ENCODE measurements at regions of chr2 and their contacts with region 1.

Region 1: DNA sequence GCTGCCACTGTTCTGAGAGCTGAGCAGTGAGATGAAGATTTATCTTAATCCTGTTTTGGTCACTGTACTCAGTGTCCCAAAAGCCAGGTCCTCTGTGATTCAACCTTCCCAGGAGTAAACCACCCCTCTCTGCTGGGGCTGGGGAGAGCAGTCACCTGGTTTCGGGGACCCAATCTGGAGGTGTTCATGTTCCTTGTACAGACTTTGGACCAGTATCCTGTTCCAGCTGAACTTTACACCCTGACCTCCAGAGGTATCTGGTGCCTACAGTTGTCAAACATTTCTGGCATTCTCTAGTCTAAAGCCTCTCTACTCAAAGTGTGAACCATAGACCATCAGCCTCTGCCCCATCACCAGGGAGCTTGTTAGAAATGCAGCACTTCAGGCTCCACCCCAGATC is 22.1 kb downstream of the CERS6 start:
- DNase-seq: peak; percentile 48 to 65
- H3K4me3 ChIP-seq: no peak overlapping the region
- H3K4me3 Mint-ChIP-seq: no peak overlapping the region
- H3K27ac Mint-ChIP-seq: peak overlapping the region; percentile 76
- H3K4me1 ChIP-seq: peaks cover 36% of the 10 kb centered on the region
- H3K4me1 Mint-ChIP-seq: peaks cover 38% of the 10 kb centered on the region
- H3K27me3 ChIP-seq: no peaks in the 10 kb centered on the region
- H3K27me3 Mint-ChIP-seq: no peaks in the 10 kb centered on the region
- CTCF ChIP-seq: no peak

Region 2: DNA sequence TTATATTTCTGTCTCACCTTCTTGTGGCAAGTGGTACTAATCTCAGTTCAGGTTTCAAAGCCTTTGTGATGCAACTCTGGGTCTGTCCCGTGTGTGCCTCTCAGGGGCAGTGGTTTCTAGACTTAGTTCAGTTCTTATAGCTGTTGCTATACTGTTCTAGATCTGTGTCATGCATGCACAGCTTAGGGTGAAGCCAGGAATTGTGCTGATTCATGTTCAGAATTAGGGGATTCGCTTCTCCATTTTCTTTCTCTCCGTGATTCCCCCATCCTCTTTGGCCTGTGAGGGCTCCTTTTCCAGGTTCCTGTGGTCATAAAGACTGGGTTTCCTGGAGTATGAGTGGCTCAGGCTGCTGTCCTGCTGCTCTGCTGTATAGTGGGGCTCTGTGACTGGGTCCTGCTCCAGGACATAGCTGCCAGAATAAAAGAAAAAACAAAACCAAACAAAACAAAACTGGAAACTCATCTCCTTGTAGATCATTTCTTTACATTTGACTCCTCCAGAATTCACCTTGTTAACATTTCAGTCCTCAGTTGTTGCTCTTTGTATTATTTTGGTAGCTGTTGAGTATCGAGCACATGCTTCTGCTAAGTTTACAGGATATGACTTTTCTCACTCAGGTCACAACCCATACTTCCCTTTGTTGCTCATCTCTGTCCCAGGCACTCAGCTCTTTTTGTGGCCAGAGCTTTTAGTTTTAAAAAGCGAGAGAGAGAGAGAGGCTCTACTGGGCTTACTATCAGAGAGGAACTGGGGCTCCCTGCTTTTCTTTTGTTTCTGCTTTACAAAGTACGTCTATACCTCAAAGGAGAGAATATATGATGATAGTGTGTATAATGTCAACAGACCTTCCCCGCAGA is 12.0 kb after region 1 on chr2:
- CTCF ChIA-PET with region 1: interaction called, 4 read pairs
- POLR2A ChIA-PET with region 1: no interaction called
- intact Hi-C with region 1: loop called (anchors 1 kb)
- DNase-seq: no peak
- H3K4me3 ChIP-seq: no peak overlapping the region
- H3K4me3 Mint-ChIP-seq: peak overlapping the region; percentile 12
- H3K27ac Mint-ChIP-seq: peak overlapping the region; percentile 56
- H3K4me1 ChIP-seq: peaks cover 52% of the 10 kb centered on the region
- H3K4me1 Mint-ChIP-seq: peaks cover 59% of the 10 kb centered on the region
- H3K27me3 ChIP-seq: no peaks in the 10 kb centered on the region
- H3K27me3 Mint-ChIP-seq: no peaks in the 10 kb centered on the region
- CTCF ChIP-seq: no peak

Region 3: DNA sequence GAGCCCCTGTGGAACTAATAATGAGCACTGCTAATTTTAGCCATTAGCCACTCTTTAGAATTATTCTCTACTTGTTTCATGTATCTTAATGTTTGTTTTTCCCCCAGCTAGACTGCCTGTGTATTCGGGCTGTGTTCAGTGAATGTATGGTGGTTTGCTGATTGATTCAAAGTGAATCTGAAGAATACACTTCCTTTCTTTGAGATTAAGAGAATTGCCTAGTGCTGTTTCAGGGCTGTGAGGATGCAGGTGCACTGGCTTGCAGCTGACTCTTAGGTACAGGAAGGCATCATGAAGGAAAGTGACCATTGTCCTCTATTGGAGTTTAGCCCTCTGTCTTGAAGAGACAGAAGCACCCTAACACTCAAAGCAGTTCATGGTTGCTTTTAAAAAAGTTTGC is 116.6 kb after region 1 on chr2:
- CTCF ChIA-PET with region 1: no interaction called
- POLR2A ChIA-PET with region 1: no interaction called
- intact Hi-C with region 1: no loop called
- DNase-seq: no peak
- H3K4me3 ChIP-seq: no peak overlapping the region
- H3K4me3 Mint-ChIP-seq: no peak overlapping the region
- H3K27ac Mint-ChIP-seq: no peak overlapping the region
- H3K4me1 ChIP-seq: peaks cover 26% of the 10 kb centered on the region
- H3K4me1 Mint-ChIP-seq: peaks cover 32% of the 10 kb centered on the region
- H3K27me3 ChIP-seq: no peaks in the 10 kb centered on the region
- H3K27me3 Mint-ChIP-seq: no peaks in the 10 kb centered on the region
- CTCF ChIP-seq: no peak